T-cell (primary cell): ENCODE measurements at regions of chr19 and their contacts with region 1.

Region 1: GRCh38 chr19:55624109-55625003 is at the start of gene ZNF784:
- DNase-seq: peak; percentile 85 to 97 (median 91)
- ATAC-seq: peak; percentile 68 to 86 (median 78)
- H3K4me3 ChIP-seq: peak within 1 kb of the TSS; percentile 52 to 58
- H3K4me3 Mint-ChIP-seq: peak within 1 kb of the TSS; percentile 84 to 87 (median 86)
- H3K27ac ChIP-seq: peak within 1 kb of the TSS; percentile 88
- H3K27ac Mint-ChIP-seq: peak within 1 kb of the TSS; percentile 94 to 95
- H3K4me1 ChIP-seq: peaks cover 30 to 44% of the 10 kb centered on the region in 2 experiments
- H3K4me1 Mint-ChIP-seq: peaks cover 54 to 58% (median 55%) of the 10 kb centered on the region in 3 donors
- H3K27me3 ChIP-seq: peaks cover 0 to 3% of the 10 kb centered on the region in 2 experiments
- H3K27me3 Mint-ChIP-seq: no peaks in the 10 kb centered on the region
- total RNA-seq, gene ZNF784: 7.2 to 13.3 (median 8.2) TPM

Region 2: DNA sequence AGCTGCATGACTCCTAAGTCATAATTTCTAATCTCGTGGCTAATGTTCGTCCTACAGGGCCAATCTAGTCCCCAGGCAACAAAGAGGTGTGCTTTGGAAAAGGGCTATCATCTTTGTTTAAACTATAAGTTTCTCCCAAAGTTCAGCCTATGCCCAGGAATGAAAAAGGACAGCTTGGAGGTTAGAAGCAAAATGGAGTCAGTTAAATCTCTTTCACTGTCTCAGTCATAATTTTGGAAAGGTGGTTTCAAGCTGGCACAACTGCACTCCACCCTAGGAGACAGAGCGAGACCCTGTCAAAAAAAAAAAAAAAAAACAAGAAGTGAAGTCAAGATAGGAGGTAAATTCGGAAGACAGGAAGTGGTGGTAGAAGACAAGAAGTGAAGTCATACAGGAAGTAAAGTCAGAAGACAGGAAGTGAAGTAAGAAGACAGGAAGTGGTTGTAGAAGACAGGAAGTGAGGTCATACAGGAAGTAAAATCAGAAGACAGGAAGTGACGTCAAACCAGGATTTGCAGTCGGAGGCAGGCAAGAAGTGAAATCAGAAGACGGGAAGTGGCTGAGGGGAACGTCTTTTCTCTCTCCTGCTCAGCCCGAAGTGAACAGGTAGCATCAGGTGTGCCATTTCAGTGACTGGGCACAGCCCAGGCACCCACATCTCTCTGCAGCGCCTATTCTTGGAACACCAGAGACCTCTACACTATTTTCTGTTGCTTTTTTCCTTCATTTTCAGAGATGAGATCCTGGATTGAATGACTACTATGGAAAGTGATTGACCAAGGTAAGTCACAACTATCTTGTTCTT is 618.5 kb before region 1 on chr19:
- CTCF ChIA-PET with region 1: no interaction called
- POLR2A ChIA-PET with region 1: interaction called in 1 of 2 experiments, 12 read pairs
- DNase-seq: peak in 34 of 35 experiments; percentile 26 to 90 (median 60)
- ATAC-seq: peak; percentile 48 to 98 (median 88)
- H3K4me3 ChIP-seq: peak overlapping the region; percentile 51 to 77
- H3K4me3 Mint-ChIP-seq: peak overlapping the region; percentile 60 to 80 (median 63)
- H3K27ac ChIP-seq: peak overlapping the region; percentile 84
- H3K27ac Mint-ChIP-seq: peak overlapping the region; percentile 63 to 80
- H3K4me1 ChIP-seq: peaks cover 5 to 19% of the 10 kb centered on the region in 2 experiments
- H3K4me1 Mint-ChIP-seq: peaks cover 18 to 35% (median 29%) of the 10 kb centered on the region in 3 donors
- H3K27me3 ChIP-seq: peaks cover 0 to 29% of the 10 kb centered on the region in 2 experiments
- H3K27me3 Mint-ChIP-seq: peaks cover 27 to 28% of the 10 kb centered on the region in 2 donors

Region 3: GRCh38 chr19:55476100-55476775 is 148.1 kb before region 1 on chr19 and contains the start of gene ZNF628:
- CTCF ChIA-PET with region 1: interaction called in 1 of 2 experiments, 6 read pairs
- POLR2A ChIA-PET with region 1: interaction called in 1 of 2 experiments, 13 read pairs
- DNase-seq: peak; percentile 96 to 99 (median 98)
- ATAC-seq: peak; percentile 95
- H3K4me3 ChIP-seq: peak within 1 kb of the TSS; percentile 53 to 90
- H3K4me3 Mint-ChIP-seq: peak within 1 kb of the TSS; percentile 82 to 86 (median 86)
- H3K27ac ChIP-seq: peak within 1 kb of the TSS; percentile 66
- H3K27ac Mint-ChIP-seq: peak within 1 kb of the TSS; percentile 91 to 94
- H3K4me1 ChIP-seq: peaks cover 2 to 24% of the 10 kb centered on the region in 2 experiments
- H3K4me1 Mint-ChIP-seq: peaks cover 26 to 34% (median 28%) of the 10 kb centered on the region in 3 donors
- H3K27me3 ChIP-seq: peaks cover 0 to 10% of the 10 kb centered on the region in 2 experiments
- H3K27me3 Mint-ChIP-seq: no peaks in the 10 kb centered on the region
- total RNA-seq, gene ZNF628: 14.2 to 24.1 (median 16.2) TPM

Region 4: GRCh38 chr19:55599468-55600279 is 24.7 kb before region 1 on chr19 and contains the start of gene FIZ1:
- CTCF ChIA-PET with region 1: interaction called in 1 of 2 experiments, 42 read pairs
- POLR2A ChIA-PET with region 1: interaction called, 5 to 11 read pairs
- DNase-seq: peak; percentile 86 to 97 (median 92)
- ATAC-seq: peak; percentile 75 to 78 (median 76)
- H3K4me3 ChIP-seq: peak within 1 kb of the TSS; percentile 86 to 97
- H3K4me3 Mint-ChIP-seq: peak within 1 kb of the TSS; percentile 98 to 99 (median 98)
- H3K27ac ChIP-seq: peak within 1 kb of the TSS; percentile 97
- H3K27ac Mint-ChIP-seq: peak within 1 kb of the TSS; percentile 100
- H3K4me1 ChIP-seq: peaks cover 7 to 33% of the 10 kb centered on the region in 2 experiments
- H3K4me1 Mint-ChIP-seq: peaks cover 25 to 44% (median 27%) of the 10 kb centered on the region in 3 donors
- H3K27me3 ChIP-seq: no peaks in the 10 kb centered on the region
- H3K27me3 Mint-ChIP-seq: no peaks in the 10 kb centered on the region
- total RNA-seq, gene FIZ1: 9.8 to 27.7 (median 19.0) TPM

Region 5: GRCh38 chr19:55605207-55605636 is 19.1 kb before region 1 on chr19:
- CTCF ChIA-PET with region 1: interaction called in 1 of 2 experiments, 42 read pairs
- POLR2A ChIA-PET with region 1: interaction called in 1 of 2 experiments, 11 read pairs
- DNase-seq: peak; percentile 90 to 99 (median 96)
- ATAC-seq: peak; percentile 72 to 80 (median 77)
- H3K4me3 ChIP-seq: peak overlapping the region; percentile 51 to 84
- H3K4me3 Mint-ChIP-seq: peak overlapping the region; percentile 78 to 86 (median 83)
- H3K27ac ChIP-seq: peak overlapping the region; percentile 74
- H3K27ac Mint-ChIP-seq: peak overlapping the region; percentile 88 to 91
- H3K4me1 ChIP-seq: peaks cover 17 to 53% of the 10 kb centered on the region in 2 experiments
- H3K4me1 Mint-ChIP-seq: peaks cover 58 to 73% (median 61%) of the 10 kb centered on the region in 3 donors
- H3K27me3 ChIP-seq: no peaks in the 10 kb centered on the region
- H3K27me3 Mint-ChIP-seq: no peaks in the 10 kb centered on the region

Region 6: DNA sequence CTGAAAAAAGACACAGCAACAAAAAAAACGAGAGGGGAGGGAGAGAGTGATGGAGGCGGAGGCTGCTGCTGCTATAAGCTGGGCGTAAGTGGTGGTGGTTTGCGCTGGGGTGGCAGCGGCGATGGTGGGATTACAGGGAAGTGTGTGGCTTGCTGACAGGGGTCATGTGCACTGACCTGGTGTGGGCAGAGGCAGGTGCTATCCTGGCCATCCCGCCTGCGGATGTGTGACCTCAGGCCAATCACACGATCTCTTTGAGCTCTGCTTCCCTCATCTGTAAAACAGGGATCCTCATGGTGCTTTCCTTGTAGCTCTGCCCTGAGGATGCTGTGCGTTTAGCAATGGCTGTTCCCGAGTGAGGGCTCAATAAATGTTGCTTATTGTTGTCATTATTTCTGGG is 13.2 kb after region 1 on chr19:
- CTCF ChIA-PET with region 1: interaction called in 1 of 2 experiments, 21 read pairs
- POLR2A ChIA-PET with region 1: interaction called in 1 of 2 experiments, 14 read pairs
- DNase-seq: no peak
- ATAC-seq: no peak
- H3K4me3 ChIP-seq: no peak overlapping the region
- H3K4me3 Mint-ChIP-seq: peak overlapping the region; percentile 35 to 98 (median 47)
- H3K27ac ChIP-seq: no peak overlapping the region
- H3K27ac Mint-ChIP-seq: peak overlapping the region; percentile 64 to 79
- H3K4me1 ChIP-seq: peaks cover 20 to 72% of the 10 kb centered on the region in 2 experiments
- H3K4me1 Mint-ChIP-seq: peaks cover 63 to 67% (median 67%) of the 10 kb centered on the region in 3 donors
- H3K27me3 ChIP-seq: no peaks in the 10 kb centered on the region
- H3K27me3 Mint-ChIP-seq: peaks cover 0 to 2% of the 10 kb centered on the region in 2 donors